Right cardiac atrium (tissue), 5 donors: ENCODE measurements at regions of chr1 and their contacts with region 1.

Region 1: GRCh38 chr1:212284744-212285684 is at the start of gene PPP2R5A:
- DNase-seq: peak; percentile 99 to 100 (median 100)
- ATAC-seq: peak; percentile 98
- H3K4me3 ChIP-seq: peak within 1 kb of the TSS; percentile 94
- H3K27ac ChIP-seq: peak within 1 kb of the TSS; percentile 99
- H3K4me1 ChIP-seq: peaks cover 2% of the 10 kb centered on the region
- H3K27me3 ChIP-seq: no peaks in the 10 kb centered on the region
- total RNA-seq, gene PPP2R5A: 58.4 to 72.0 (median 61.3) TPM

Region 2: GRCh38 chr1:211514030-211514754 is 770.8 kb before region 1 on chr1:
- intact Hi-C with region 1: no loop called
- DNase-seq: peak; percentile 82 to 89 (median 88)
- ATAC-seq: peak; percentile 91
- H3K4me3 ChIP-seq: no peak overlapping the region
- H3K27ac ChIP-seq: no peak overlapping the region
- H3K4me1 ChIP-seq: no peaks in the 10 kb centered on the region
- H3K27me3 ChIP-seq: no peaks in the 10 kb centered on the region

Region 3: DNA sequence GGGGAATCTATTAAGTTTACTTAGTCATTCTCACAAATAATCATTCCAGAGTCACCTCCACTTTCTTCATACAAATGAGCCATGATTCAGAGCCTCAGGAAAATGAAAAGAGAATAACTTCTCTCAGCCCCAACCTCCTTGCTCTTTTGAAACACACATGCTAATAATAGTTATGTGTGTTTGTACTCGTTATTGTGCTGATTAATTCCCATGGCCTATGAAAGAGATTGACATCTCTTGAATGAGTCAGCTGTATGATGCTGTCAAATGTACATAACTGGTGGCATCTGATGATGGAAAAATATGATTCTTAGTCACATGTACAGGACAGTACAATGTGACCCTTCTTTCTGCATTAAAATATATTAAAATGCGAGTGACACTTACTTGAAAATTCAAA is 208.0 kb before region 1 on chr1:
- intact Hi-C with region 1: loop called (anchors 5 to 10 kb)
- DNase-seq: no peak
- ATAC-seq: no peak
- H3K4me3 ChIP-seq: no peak overlapping the region
- H3K27ac ChIP-seq: no peak overlapping the region
- H3K4me1 ChIP-seq: no peaks in the 10 kb centered on the region
- H3K27me3 ChIP-seq: no peaks in the 10 kb centered on the region

Region 4: GRCh38 chr1:212162635-212163034 is 122.4 kb before region 1 on chr1:
- intact Hi-C with region 1: loop called in 1 of 4 experiments (anchors 10 kb)
- DNase-seq: peak; percentile 22 to 63 (median 53)
- ATAC-seq: peak; percentile 61
- H3K4me3 ChIP-seq: no peak overlapping the region
- H3K27ac ChIP-seq: no peak overlapping the region
- H3K4me1 ChIP-seq: peaks cover 6% of the 10 kb centered on the region
- H3K27me3 ChIP-seq: no peaks in the 10 kb centered on the region

Region 5: DNA sequence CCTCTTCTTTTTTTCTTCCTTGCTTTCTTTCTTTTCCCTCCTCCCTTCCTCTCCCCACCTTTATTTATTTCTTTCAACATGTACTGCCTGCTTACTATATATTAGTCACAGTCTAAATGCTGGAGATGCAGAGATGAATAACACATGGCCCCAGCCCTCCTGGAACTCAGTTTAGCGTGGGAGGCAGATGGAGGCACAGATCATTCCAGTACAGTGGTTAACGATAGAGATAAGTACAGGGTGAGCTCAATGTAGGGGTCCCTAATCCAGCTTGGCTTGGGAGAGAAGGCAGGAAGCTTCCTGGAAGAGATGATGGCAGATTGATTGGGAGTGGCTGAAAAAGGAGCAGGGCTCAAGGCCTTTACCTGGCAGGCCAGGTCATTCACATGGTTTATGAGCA is 55.4 kb before region 1 on chr1:
- intact Hi-C with region 1: no loop called
- DNase-seq: no peak
- ATAC-seq: no peak
- H3K4me3 ChIP-seq: no peak overlapping the region
- H3K27ac ChIP-seq: no peak overlapping the region
- H3K4me1 ChIP-seq: peaks cover 5% of the 10 kb centered on the region
- H3K27me3 ChIP-seq: no peaks in the 10 kb centered on the region